ENCODE measurements at regions of chr1 and their contacts with region 1.

Region 1: GRCh38 chr1:105467549-105467948 is 1588.9 kb upstream of the PRMT6 start:
- DNase-seq: no peak
- H3K4me3 ChIP-seq: no peak overlapping the region
- H3K4me3 Mint-ChIP-seq: no peak overlapping the region
- H3K27ac ChIP-seq: no peak overlapping the region
- H3K27ac Mint-ChIP-seq: no peak overlapping the region
- H3K4me1 ChIP-seq: no peaks in the 10 kb centered on the region
- H3K4me1 Mint-ChIP-seq: no peaks in the 10 kb centered on the region
- H3K27me3 ChIP-seq: no peaks in the 10 kb centered on the region
- H3K27me3 Mint-ChIP-seq: no peaks in the 10 kb centered on the region

Region 2: GRCh38 chr1:105027838-105028471 is 439.6 kb before region 1 on chr1:
- CTCF ChIA-PET with region 1: no interaction called
- POLR2A ChIA-PET with region 1: no interaction called
- intact Hi-C with region 1: no loop called
- DNase-seq: no peak
- H3K4me3 ChIP-seq: no peak overlapping the region
- H3K4me3 Mint-ChIP-seq: no peak overlapping the region
- H3K27ac ChIP-seq: no peak overlapping the region
- H3K27ac Mint-ChIP-seq: no peak overlapping the region
- H3K4me1 ChIP-seq: no peaks in the 10 kb centered on the region
- H3K4me1 Mint-ChIP-seq: no peaks in the 10 kb centered on the region
- H3K27me3 ChIP-seq: no peaks in the 10 kb centered on the region
- H3K27me3 Mint-ChIP-seq: no peaks in the 10 kb centered on the region

Region 3: DNA sequence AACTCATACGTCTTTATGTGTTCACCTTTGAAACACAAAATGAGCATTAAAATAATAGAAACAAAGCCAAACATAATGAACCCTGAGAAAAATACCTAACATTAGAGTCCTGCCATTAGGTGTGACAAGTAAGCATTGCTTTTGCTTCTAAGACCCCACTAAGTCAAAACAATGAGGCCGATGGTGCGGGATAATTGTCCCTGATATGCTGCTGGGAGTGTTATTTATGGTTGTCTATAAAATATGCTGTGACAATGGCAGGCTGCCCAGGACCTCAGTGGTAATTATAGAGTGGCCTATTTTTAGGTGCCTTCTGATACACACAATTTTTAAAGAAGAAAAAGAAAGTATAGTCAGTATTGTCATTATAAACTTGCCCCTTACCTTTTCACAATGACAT is 294.8 kb before region 1 on chr1:
- CTCF ChIA-PET with region 1: no interaction called
- POLR2A ChIA-PET with region 1: no interaction called
- intact Hi-C with region 1: no loop called
- DNase-seq: no peak
- H3K4me3 ChIP-seq: no peak overlapping the region
- H3K4me3 Mint-ChIP-seq: no peak overlapping the region
- H3K27ac ChIP-seq: no peak overlapping the region
- H3K27ac Mint-ChIP-seq: no peak overlapping the region
- H3K4me1 ChIP-seq: no peaks in the 10 kb centered on the region
- H3K4me1 Mint-ChIP-seq: no peaks in the 10 kb centered on the region
- H3K27me3 ChIP-seq: no peaks in the 10 kb centered on the region
- H3K27me3 Mint-ChIP-seq: no peaks in the 10 kb centered on the region

Region 4: DNA sequence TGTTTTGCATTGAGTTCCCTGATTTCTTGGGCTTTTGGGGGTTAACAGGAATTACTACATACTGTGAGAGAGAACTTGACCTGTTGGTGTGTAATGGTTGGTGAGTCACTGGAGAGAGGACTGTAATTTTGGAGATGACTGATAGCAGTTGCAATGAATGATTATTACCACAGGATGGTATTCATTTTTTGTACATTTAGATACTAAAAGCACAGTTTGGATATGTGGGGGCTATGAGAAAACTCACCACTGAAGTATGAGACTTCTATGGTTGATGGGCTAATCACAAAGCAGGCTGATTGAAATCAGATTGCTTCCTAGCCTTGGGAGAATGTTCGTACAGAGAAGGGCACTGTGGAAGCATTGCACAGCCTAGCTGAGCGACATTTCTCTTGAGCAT is 17.7 kb after region 1 on chr1:
- CTCF ChIA-PET with region 1: no interaction called
- POLR2A ChIA-PET with region 1: no interaction called
- intact Hi-C with region 1: loop called (anchors 1 kb)
- DNase-seq: no peak
- H3K4me3 ChIP-seq: no peak overlapping the region
- H3K4me3 Mint-ChIP-seq: no peak overlapping the region
- H3K27ac ChIP-seq: no peak overlapping the region
- H3K27ac Mint-ChIP-seq: no peak overlapping the region
- H3K4me1 ChIP-seq: no peaks in the 10 kb centered on the region
- H3K4me1 Mint-ChIP-seq: no peaks in the 10 kb centered on the region
- H3K27me3 ChIP-seq: no peaks in the 10 kb centered on the region
- H3K27me3 Mint-ChIP-seq: no peaks in the 10 kb centered on the region

Measured in CD4-positive, alpha-beta memory T cell (primary cell).